ENCODE measurements at regions of chr19 and their contacts with region 1.

Region 1: GRCh38 chr19:33373701-33374421 is at the start of gene CEBPG:
- DNase-seq: peak; percentile 58
- ATAC-seq: peak; percentile 43
- H3K4me3 Mint-ChIP-seq: peak within 1 kb of the TSS; percentile 84
- H3K27ac Mint-ChIP-seq: peak within 1 kb of the TSS; percentile 84
- H3K4me1 Mint-ChIP-seq: peaks cover 47% of the 10 kb centered on the region
- H3K27me3 Mint-ChIP-seq: no peaks in the 10 kb centered on the region
- CTCF ChIP-seq: peak; percentile 24
- total RNA-seq, gene CEBPG: 28.3 to 30.1 TPM

Region 2: GRCh38 chr19:33302175-33302973 is 71.5 kb before region 1 on chr19 and contains the start of gene CEBPA:
- CTCF ChIA-PET with region 1: interaction called, 5 read pairs
- POLR2A ChIA-PET with region 1: interaction called, 10 read pairs
- intact Hi-C with region 1: no loop called
- DNase-seq: peak; percentile 70
- ATAC-seq: peak; percentile 94
- H3K4me3 Mint-ChIP-seq: peak within 1 kb of the TSS; percentile 71
- H3K27ac Mint-ChIP-seq: no peak within 1 kb of the TSS
- H3K4me1 Mint-ChIP-seq: no peaks in the 10 kb centered on the region
- H3K27me3 Mint-ChIP-seq: peaks cover 38% of the 10 kb centered on the region
- CTCF ChIP-seq: peak; percentile 33
- total RNA-seq, gene CEBPA: 0.34 to 0.45 TPM